Activated naive CD4-positive, alpha-beta T cell treated with anti-CD3 and anti-CD28 coated beads for 36 hours (primary cell): ENCODE measurements at regions of chr20 and their contacts with region 1.

Region 1: DNA sequence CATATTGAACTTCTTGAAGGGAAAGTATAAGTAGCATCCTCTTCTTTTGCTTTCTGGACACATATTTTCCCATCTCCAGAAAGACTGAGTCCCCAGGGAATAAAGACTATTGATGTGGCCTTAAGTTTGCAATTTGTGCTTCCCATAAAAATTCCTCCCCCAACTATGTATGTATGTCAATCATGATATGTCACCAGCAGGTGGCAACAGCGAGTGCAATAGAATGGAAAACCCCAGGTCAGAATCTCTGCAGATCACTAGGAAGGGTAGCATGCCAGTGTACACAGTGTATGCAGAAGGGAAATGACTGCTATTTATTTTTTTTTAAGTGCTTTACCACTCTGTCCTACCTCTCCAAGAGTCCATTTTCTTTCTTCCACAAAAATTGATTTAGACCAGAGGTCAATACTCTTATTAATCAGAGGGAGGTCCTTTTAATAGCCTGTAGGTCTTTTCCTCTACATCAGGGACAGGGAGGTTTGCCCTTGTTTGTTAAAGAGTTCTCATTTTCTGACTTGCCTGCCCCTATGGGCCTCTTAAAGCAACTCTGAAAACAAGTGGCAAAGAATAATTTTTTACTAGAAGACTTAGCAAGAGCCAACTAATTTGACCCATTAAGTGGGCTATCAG is 61.4 kb downstream of the BMP2 start:
- DNase-seq: peak; percentile 62
- H3K4me3 Mint-ChIP-seq: no peak overlapping the region
- H3K27ac Mint-ChIP-seq: no peak overlapping the region
- H3K4me1 Mint-ChIP-seq: no peaks in the 10 kb centered on the region
- H3K27me3 Mint-ChIP-seq: no peaks in the 10 kb centered on the region

Region 2: DNA sequence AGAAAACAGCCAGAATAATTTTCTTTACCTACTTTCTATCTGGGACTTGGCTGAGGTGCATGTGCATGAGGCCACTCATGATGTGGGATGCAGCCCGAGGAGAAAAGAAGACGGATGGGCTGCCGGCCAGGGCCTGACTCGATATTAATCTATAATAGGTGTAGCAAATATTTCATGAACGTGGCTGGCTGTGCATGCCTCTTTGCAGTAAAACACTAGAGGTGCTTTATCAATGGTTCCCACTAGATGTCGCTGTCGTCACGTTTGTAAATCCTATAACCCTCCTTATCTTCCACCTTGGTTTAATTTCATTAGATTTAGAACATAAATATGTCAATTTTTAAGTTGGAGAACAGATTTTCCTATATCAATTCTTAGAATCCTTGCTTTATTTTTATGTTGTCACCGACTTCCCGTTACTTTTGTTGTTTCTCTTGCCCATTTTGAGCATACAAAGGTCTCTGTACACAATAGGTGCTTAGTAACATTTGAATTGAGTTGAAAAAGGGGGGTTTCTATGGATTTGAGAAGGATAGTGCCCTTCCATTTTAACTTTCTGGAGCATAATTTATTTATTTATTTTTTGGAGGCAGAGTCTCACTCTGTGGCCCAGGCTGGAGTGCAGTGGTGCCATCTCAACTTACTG is 686.4 kb before region 1 on chr20:
- CTCF ChIA-PET with region 1: no interaction called
- intact Hi-C with region 1: loop called (anchors 2 kb)
- DNase-seq: peak; percentile 67
- H3K4me3 Mint-ChIP-seq: no peak overlapping the region
- H3K27ac Mint-ChIP-seq: no peak overlapping the region
- H3K4me1 Mint-ChIP-seq: no peaks in the 10 kb centered on the region
- H3K27me3 Mint-ChIP-seq: peaks cover 10% of the 10 kb centered on the region

Region 3: DNA sequence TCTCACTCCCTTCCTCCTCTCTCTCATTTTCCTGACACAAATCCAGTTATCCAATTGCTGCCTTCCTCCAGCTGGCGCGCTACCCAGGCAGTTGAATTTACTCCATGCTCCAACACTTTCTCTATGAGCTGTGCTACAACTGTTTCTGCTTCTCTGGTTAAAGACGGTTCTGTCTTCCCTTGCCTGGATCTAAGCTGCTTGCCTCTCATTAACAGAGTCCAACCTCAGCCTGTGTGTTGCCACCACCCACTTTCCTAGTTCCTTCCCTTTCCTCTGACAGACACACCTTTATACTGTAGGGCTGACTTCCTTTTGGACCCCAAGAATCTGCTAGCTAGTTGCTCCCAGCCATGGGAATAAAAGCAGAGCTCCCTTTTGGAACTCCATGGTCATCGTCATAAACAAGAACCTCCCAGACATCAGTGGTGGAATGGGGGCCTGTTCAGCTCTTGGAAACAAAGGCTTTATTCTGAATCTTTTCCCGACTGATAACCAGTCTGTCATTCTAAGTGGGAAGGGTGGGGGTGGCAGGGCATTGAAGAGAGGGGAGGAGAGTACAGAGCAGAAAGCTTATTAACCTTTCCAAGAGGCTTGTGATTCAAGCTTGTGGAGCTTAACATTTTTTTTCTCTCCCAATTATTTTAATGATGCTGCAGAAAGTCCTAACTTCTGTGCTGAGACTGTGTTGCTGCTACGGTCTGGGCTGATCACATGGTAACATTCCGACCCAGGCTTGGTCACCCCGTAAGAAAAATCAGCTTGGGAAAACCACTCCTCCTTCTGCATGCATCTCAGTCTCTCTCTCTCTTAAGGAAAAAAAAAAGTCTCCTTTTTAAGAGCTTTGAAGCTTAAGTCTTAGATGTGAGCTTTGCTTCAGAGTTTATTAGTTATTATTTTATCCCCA is 92.7 kb before region 1 on chr20:
- CTCF ChIA-PET with region 1: no interaction called
- intact Hi-C with region 1: no loop called
- DNase-seq: no peak
- H3K4me3 Mint-ChIP-seq: no peak overlapping the region
- H3K27ac Mint-ChIP-seq: no peak overlapping the region
- H3K4me1 Mint-ChIP-seq: no peaks in the 10 kb centered on the region
- H3K27me3 Mint-ChIP-seq: no peaks in the 10 kb centered on the region

Region 4: DNA sequence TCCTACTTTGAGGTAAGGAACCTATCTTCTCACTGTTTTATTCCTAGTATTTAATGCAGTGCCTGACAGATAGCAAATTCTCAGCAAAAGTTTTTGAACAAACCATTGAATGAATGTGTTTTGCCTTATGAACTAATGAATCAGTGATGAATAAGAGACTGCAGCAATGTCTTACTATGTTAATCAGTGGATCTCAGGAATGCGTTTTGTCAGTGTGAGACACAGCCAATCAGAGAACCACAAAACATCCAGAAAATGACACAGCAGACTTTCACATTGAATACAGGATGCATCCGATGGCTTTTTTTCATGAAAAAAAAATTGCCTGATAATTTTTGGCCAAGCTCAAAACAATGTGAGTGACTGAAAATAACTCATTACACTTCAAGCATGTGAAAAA is 209.1 kb after region 1 on chr20:
- CTCF ChIA-PET with region 1: no interaction called
- intact Hi-C with region 1: no loop called
- DNase-seq: no peak
- H3K4me3 Mint-ChIP-seq: no peak overlapping the region
- H3K27ac Mint-ChIP-seq: no peak overlapping the region
- H3K4me1 Mint-ChIP-seq: no peaks in the 10 kb centered on the region
- H3K27me3 Mint-ChIP-seq: no peaks in the 10 kb centered on the region

Region 5: DNA sequence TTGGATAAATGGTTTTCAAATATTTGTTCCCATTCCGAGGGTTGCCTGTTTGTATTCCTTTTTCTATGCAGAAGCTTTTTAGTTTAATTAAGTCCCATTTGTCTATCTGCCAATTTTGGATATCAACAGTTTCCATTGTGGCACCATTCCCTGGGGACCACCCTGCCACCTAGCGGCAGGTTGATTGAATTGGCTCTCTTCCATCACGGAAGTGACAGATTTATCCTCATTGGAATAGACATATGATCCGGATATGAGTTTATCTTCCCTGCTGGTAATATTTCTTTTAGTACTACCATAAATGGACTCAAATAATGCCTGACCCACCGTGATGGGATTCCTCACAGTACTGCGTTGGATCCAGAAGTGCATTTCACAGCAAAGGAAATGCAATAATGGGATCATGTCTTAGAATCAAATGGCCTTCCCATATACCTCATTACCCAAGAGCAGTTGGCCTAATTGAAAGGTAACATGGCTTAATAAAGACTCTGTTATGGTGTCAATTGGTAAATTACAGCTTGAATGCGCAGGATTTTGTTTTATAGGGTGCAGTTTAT is 265.6 kb after region 1 on chr20:
- CTCF ChIA-PET with region 1: no interaction called
- intact Hi-C with region 1: loop called (anchors 2 kb)
- DNase-seq: peak; percentile 8
- H3K4me3 Mint-ChIP-seq: no peak overlapping the region
- H3K27ac Mint-ChIP-seq: no peak overlapping the region
- H3K4me1 Mint-ChIP-seq: no peaks in the 10 kb centered on the region
- H3K27me3 Mint-ChIP-seq: no peaks in the 10 kb centered on the region

Region 6: GRCh38 chr20:7285918-7286556 is 457.1 kb after region 1 on chr20:
- CTCF ChIA-PET with region 1: no interaction called
- intact Hi-C with region 1: loop called (anchors 2 kb)
- DNase-seq: peak; percentile 55
- H3K4me3 Mint-ChIP-seq: no peak overlapping the region
- H3K27ac Mint-ChIP-seq: no peak overlapping the region
- H3K4me1 Mint-ChIP-seq: no peaks in the 10 kb centered on the region
- H3K27me3 Mint-ChIP-seq: no peaks in the 10 kb centered on the region

Region 7: GRCh38 chr20:7375905-7376304 is 547.0 kb after region 1 on chr20:
- CTCF ChIA-PET with region 1: no interaction called
- intact Hi-C with region 1: loop called (anchors 5 kb)
- DNase-seq: no peak
- H3K4me3 Mint-ChIP-seq: no peak overlapping the region
- H3K27ac Mint-ChIP-seq: no peak overlapping the region
- H3K4me1 Mint-ChIP-seq: no peaks in the 10 kb centered on the region
- H3K27me3 Mint-ChIP-seq: no peaks in the 10 kb centered on the region

Region 8: DNA sequence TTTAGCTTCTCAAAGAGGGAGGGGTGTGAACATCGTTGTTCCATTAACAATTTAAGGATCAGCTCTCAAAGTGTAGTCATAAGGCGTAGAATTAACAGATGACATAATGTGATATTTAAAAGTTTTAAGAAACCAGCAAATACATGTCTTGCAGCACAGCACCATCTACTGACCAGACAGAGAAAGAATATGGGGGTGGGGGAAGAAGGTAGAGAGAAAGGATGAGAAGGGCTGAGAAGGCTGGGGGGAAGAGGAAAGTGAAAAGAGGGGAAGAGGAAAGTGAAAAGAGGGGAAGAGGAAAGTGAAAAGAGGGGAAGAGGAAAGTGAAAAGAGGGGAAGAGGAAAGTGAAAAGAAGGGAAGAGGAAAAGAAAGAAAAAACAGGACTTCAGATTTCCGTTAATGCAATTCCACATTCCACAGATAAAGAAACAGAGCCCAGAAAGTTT is 1030.5 kb after region 1 on chr20:
- CTCF ChIA-PET with region 1: no interaction called
- intact Hi-C with region 1: loop called (anchors 2 kb)
- DNase-seq: peak; percentile 31
- H3K4me3 Mint-ChIP-seq: no peak overlapping the region
- H3K27ac Mint-ChIP-seq: no peak overlapping the region
- H3K4me1 Mint-ChIP-seq: no peaks in the 10 kb centered on the region
- H3K27me3 Mint-ChIP-seq: peaks cover 3% of the 10 kb centered on the region